ENCODE measurements at regions of chr12 and their contacts with region 1.

Region 1: GRCh38 chr12:103771466-103771865 is 69.6 kb downstream of the NT5DC3 start:
- DNase-seq: peak; percentile 50 to 66
- H3K4me3 ChIP-seq: no peak overlapping the region
- H3K4me3 Mint-ChIP-seq: no peak overlapping the region
- H3K27ac Mint-ChIP-seq: no peak overlapping the region
- H3K4me1 ChIP-seq: no peaks in the 10 kb centered on the region
- H3K4me1 Mint-ChIP-seq: peaks cover 7% of the 10 kb centered on the region
- H3K27me3 ChIP-seq: no peaks in the 10 kb centered on the region
- H3K27me3 Mint-ChIP-seq: no peaks in the 10 kb centered on the region
- CTCF ChIP-seq: peak; percentile 43 to 73

Region 2: GRCh38 chr12:103667125-103667524 is 104.3 kb before region 1 on chr12:
- CTCF ChIA-PET with region 1: no interaction called
- POLR2A ChIA-PET with region 1: no interaction called
- intact Hi-C with region 1: no loop called
- DNase-seq: no peak
- H3K4me3 ChIP-seq: no peak overlapping the region
- H3K4me3 Mint-ChIP-seq: no peak overlapping the region
- H3K27ac Mint-ChIP-seq: no peak overlapping the region
- H3K4me1 ChIP-seq: peaks cover 1% of the 10 kb centered on the region; the same call in 1 of the 2 replicates
- H3K4me1 Mint-ChIP-seq: no peaks in the 10 kb centered on the region
- H3K27me3 ChIP-seq: no peaks in the 10 kb centered on the region
- H3K27me3 Mint-ChIP-seq: no peaks in the 10 kb centered on the region
- CTCF ChIP-seq: no peak

Region 3: DNA sequence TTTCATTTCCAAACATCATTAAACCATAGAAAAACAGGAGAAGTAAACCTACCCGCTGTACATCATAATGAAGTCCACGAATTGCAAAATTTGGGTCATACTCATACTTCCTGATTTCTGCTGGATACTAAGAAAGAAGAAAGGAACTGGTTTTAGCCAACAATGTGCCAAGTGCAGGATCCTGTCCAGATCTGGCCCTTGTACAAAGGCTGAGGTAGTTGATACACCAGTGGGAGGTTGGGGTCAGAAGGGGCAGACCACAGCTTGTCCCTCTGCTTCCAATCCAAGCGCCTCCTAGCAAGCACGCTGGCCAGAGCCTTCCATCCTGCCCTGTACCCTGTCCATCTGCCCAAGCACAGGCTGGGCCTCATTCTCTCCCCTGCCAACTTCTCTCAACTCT is 35.3 kb after region 1 on chr12:
- CTCF ChIA-PET with region 1: no interaction called
- POLR2A ChIA-PET with region 1: no interaction called
- intact Hi-C with region 1: no loop called
- DNase-seq: no peak
- H3K4me3 ChIP-seq: no peak overlapping the region
- H3K4me3 Mint-ChIP-seq: no peak overlapping the region
- H3K27ac Mint-ChIP-seq: no peak overlapping the region
- H3K4me1 ChIP-seq: peaks cover 12% of the 10 kb centered on the region; the same call in 1 of the 2 replicates
- H3K4me1 Mint-ChIP-seq: peaks cover 23% of the 10 kb centered on the region
- H3K27me3 ChIP-seq: no peaks in the 10 kb centered on the region
- H3K27me3 Mint-ChIP-seq: no peaks in the 10 kb centered on the region
- CTCF ChIP-seq: no peak

Region 4: GRCh38 chr12:103868215-103868614 is 96.7 kb after region 1 on chr12:
- CTCF ChIA-PET with region 1: interaction called, 4 read pairs
- POLR2A ChIA-PET with region 1: no interaction called
- intact Hi-C with region 1: loop called (anchors 1 kb)
- DNase-seq: no peak
- H3K4me3 ChIP-seq: no peak overlapping the region
- H3K4me3 Mint-ChIP-seq: no peak overlapping the region
- H3K27ac Mint-ChIP-seq: no peak overlapping the region
- H3K4me1 ChIP-seq: no peaks in the 10 kb centered on the region
- H3K4me1 Mint-ChIP-seq: no peaks in the 10 kb centered on the region
- H3K27me3 ChIP-seq: no peaks in the 10 kb centered on the region
- H3K27me3 Mint-ChIP-seq: no peaks in the 10 kb centered on the region
- CTCF ChIP-seq: no peak

Region 5: GRCh38 chr12:103956516-103957027 is 185.1 kb after region 1 on chr12:
- CTCF ChIA-PET with region 1: no interaction called
- POLR2A ChIA-PET with region 1: no interaction called
- intact Hi-C with region 1: no loop called
- DNase-seq: peak; percentile 45 to 47
- H3K4me3 ChIP-seq: peak overlapping the region; percentile 97
- H3K4me3 Mint-ChIP-seq: peak overlapping the region; percentile 79
- H3K27ac Mint-ChIP-seq: peak overlapping the region; percentile 97
- H3K4me1 ChIP-seq: peaks cover 4% of the 10 kb centered on the region
- H3K4me1 Mint-ChIP-seq: peaks cover 18% of the 10 kb centered on the region
- H3K27me3 ChIP-seq: no peaks in the 10 kb centered on the region
- H3K27me3 Mint-ChIP-seq: no peaks in the 10 kb centered on the region
- CTCF ChIP-seq: no peak

Measured in Caco-2 (cell line).